ENCODE measurements at regions of chr3 and their contacts with region 1.

Region 1: DNA sequence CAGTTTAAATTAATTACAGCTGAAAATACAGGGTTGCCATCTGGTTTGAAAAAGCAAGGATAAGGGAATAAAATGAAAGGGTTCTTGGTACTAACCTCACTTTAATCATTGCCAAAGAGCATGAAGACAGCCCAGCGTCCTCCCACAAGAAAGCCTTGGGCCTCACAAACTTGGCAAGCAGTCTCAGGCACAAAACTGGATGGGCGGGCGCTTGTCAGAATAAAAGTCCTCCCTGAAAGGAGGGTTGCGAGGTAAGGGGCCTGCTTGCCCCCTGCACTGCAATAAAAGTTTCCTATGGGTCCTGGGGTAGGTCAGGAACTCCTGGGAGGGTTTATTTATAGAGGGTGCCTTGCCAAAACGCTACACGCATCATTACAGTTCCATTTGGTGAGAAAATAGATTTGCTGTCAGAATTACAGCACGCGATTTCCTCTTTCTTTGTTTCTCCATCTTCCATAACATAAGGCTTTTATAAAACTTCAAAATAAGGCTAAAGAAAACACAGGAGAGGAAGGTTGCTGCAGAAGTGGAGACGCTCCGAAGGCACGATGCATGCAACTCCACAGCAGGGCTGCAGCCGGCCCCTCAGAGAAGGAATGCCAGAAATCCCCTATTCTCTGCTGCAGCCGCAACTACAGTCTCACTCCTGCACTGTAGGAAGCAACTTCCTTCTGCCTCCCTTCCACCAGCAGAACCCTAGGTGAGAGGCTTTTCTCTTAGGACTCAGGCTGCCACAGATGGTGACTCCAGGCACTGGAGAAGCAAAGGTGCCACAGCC is 61.3 kb downstream of the VGLL4 start:
- DNase-seq: peak; percentile 85
- H3K4me3 Mint-ChIP-seq: peak overlapping the region; percentile 71
- H3K27ac Mint-ChIP-seq: peak overlapping the region; percentile 82
- H3K4me1 Mint-ChIP-seq: peaks cover 46% of the 10 kb centered on the region
- H3K27me3 Mint-ChIP-seq: no peaks in the 10 kb centered on the region
- CTCF ChIP-seq: no peak

Region 2: GRCh38 chr3:11568503-11569155 is 13.8 kb before region 1 on chr3:
- CTCF ChIA-PET with region 1: interaction called, 3 read pairs
- POLR2A ChIA-PET with region 1: interaction called, 17 read pairs
- intact Hi-C with region 1: loop called (anchors 2 kb)
- DNase-seq: peak; percentile 86
- H3K4me3 Mint-ChIP-seq: peak overlapping the region; percentile 76
- H3K27ac Mint-ChIP-seq: peak overlapping the region; percentile 99
- H3K4me1 Mint-ChIP-seq: peaks cover 27% of the 10 kb centered on the region
- H3K27me3 Mint-ChIP-seq: no peaks in the 10 kb centered on the region
- CTCF ChIP-seq: no peak

Measured in MCF 10A (cell line).